Dendritic cell treated with granulocyte-macrophage colony-stimulating factor and Interleukin-4, amounts not matched to agents 40 ng/mL and 50 ng/mL, for 4 days (primary cell): ENCODE measurements at regions of chr4 and their contacts with region 1.

Region 1: DNA sequence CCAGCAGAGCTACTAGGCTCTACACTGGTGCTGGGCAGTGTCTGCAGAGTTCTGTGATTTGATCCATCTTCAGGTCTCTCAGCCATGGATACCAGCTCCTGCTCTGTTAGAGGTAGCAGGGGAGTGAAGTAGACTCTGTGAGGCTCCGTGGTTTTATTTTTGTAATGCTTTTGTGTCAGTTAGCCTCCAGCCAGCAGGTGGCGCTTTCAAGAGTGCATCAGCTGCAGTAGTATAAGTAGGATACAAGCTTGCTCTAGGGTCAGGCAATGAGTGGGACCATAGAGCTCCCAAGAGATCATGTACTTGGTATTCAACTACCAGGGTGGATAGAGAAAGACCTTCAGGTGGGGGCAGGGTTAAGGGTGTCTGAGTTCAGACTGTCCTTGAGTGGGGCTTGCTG is 362.5 kb upstream of the TRAM1L1 start:
- H3K4me3 Mint-ChIP-seq: no peak overlapping the region
- H3K27ac Mint-ChIP-seq: no peak overlapping the region
- H3K4me1 Mint-ChIP-seq: no peaks in the 10 kb centered on the region
- H3K27me3 Mint-ChIP-seq: no peaks in the 10 kb centered on the region

Region 2: DNA sequence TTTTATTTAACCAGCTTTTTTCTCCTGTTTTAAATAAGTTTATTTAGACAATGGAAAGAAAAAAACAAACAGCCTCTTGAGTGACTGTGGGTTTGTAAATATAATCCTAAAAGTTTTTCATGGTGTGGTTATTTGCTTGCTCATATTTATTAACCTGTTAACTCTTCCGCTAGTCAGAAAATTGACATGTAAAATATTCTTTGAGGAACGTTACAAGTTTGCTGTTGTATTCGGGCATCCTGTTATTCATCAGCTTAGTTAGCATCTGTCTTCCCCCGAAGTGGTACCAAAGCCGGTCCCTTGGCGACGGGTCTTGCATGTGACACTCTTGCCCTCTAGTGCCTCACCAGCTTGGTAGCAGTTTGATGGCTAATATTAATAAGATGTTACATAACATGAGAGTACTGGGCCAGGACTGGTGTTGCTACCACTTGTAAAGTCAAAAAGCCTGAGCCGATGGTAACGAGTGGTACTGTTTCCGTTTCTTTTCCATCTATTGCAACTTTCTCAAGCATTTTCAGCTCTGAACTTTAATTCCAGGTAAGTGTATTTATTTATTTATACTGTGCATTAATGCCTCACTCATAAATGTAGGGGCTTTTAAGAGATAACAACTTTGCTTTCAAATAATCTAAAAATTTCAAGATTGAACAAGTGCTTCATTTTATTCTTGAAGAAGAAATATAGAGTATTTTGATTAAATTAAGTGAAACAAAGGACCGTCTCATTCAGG is 586.3 kb after region 1 on chr4 and contains the start of gene NDST3:
- intact Hi-C with region 1: loop called (anchors 5 kb)
- H3K4me3 Mint-ChIP-seq: peak within 1 kb of the TSS; percentile 51
- H3K27ac Mint-ChIP-seq: no peak within 1 kb of the TSS
- H3K4me1 Mint-ChIP-seq: peaks cover 13% of the 10 kb centered on the region
- H3K27me3 Mint-ChIP-seq: peaks cover 29% of the 10 kb centered on the region